ENCODE measurements at regions of chr5 and their contacts with region 1.

Region 1: GRCh38 chr5:178075840-178076548 is 37.3 kb upstream of the N4BP3 start:
- DNase-seq: peak; percentile 13
- H3K4me3 ChIP-seq: no peak overlapping the region
- H3K27ac ChIP-seq: peak overlapping the region; percentile 21
- H3K27me3 ChIP-seq: peaks cover 36% of the 10 kb centered on the region
- CTCF ChIP-seq: peak; percentile 88

Region 2: GRCh38 chr5:178120868-178121357 is 44.9 kb after region 1 on chr5:
- CTCF ChIA-PET with region 1: interaction called, 15 read pairs
- POLR2A ChIA-PET with region 1: interaction called, 8 read pairs
- DNase-seq: peak; percentile 55
- H3K4me3 ChIP-seq: peak overlapping the region; percentile 43
- H3K27ac ChIP-seq: no peak overlapping the region
- H3K27me3 ChIP-seq: peaks cover 28% of the 10 kb centered on the region
- CTCF ChIP-seq: peak; percentile 52

Region 3: DNA sequence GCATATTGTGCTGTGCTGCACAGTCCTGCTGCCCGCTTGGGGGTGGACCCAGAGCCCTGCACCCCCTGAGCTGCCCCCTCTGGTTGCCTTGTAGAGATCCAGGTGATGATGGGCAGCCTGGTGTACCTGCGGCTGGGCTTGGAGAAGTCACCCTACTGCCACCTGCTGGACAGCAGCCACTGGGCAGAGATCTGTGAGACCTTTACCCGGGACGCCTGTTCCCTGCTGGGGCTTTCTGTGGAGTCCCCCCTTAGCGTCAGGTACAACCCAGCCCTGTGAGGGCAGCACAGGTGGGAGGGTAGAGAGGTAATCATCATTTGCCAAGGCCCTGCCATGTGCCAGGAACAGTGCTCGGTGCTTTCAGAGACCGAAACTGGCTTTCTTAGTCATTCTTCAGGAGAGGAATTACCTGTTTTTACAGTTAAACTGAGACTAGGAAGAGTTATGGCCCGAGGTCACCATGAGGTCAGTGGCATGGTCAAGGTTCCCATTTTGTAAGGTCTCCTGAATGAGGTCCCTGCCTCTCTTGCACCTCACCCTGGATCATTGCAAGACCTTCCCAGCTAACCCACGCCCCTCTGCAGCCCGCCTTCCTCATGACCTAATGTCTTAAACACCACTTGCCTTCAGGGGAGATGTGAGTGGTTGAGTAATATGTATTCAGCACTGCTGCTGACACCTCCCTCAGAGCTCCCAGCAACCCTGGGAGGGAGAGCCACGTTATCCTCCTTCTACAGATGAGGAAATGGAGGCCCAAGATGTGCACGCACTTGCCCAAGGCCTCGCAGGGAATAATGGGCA is 70.2 kb after region 1 on chr5:
- CTCF ChIA-PET with region 1: interaction called, 104 read pairs
- POLR2A ChIA-PET with region 1: interaction called, 15 read pairs
- DNase-seq: no peak
- H3K4me3 ChIP-seq: no peak overlapping the region
- H3K27ac ChIP-seq: peak overlapping the region; percentile 2
- H3K27me3 ChIP-seq: no peaks in the 10 kb centered on the region
- CTCF ChIP-seq: peak; percentile 77

Region 4: GRCh38 chr5:178153573-178154343 is 77.8 kb after region 1 on chr5 and contains the start of gene NHP2:
- CTCF ChIA-PET with region 1: interaction called, 104 read pairs
- POLR2A ChIA-PET with region 1: interaction called, 7 read pairs
- DNase-seq: peak; percentile 98
- H3K4me3 ChIP-seq: peak within 1 kb of the TSS; percentile 61
- H3K27ac ChIP-seq: peak within 1 kb of the TSS; percentile 52
- H3K27me3 ChIP-seq: no peaks in the 10 kb centered on the region
- CTCF ChIP-seq: no peak
- polyA plus RNA-seq, gene NHP2: 93.1 and 108 TPM in 2 replicates

Region 5: GRCh38 chr5:178163772-178164735 is 88.1 kb after region 1 on chr5:
- CTCF ChIA-PET with region 1: interaction called, 38 read pairs
- POLR2A ChIA-PET with region 1: no interaction called
- DNase-seq: no peak
- H3K4me3 ChIP-seq: peak overlapping the region; percentile 42
- H3K27ac ChIP-seq: no peak overlapping the region
- H3K27me3 ChIP-seq: peaks cover 36% of the 10 kb centered on the region
- CTCF ChIP-seq: peak; percentile 99

Region 6: GRCh38 chr5:178170995-178171394 is 95.0 kb after region 1 on chr5:
- CTCF ChIA-PET with region 1: interaction called, 15 read pairs
- POLR2A ChIA-PET with region 1: no interaction called
- DNase-seq: no peak
- H3K4me3 ChIP-seq: no peak overlapping the region
- H3K27ac ChIP-seq: no peak overlapping the region
- H3K27me3 ChIP-seq: peaks cover 14% of the 10 kb centered on the region
- CTCF ChIP-seq: no peak

Region 7: GRCh38 chr5:178204182-178204894 is 128.3 kb after region 1 on chr5 and contains the start of gene HNRNPAB:
- CTCF ChIA-PET with region 1: interaction called, 4 read pairs
- POLR2A ChIA-PET with region 1: interaction called, 11 read pairs
- DNase-seq: peak; percentile 95
- H3K4me3 ChIP-seq: peak within 1 kb of the TSS; percentile 75
- H3K27ac ChIP-seq: peak within 1 kb of the TSS; percentile 11
- H3K27me3 ChIP-seq: no peaks in the 10 kb centered on the region
- CTCF ChIP-seq: no peak
- polyA plus RNA-seq, gene HNRNPAB: 90.9 and 102 TPM in 2 replicates

Measured in AG04450 (cell line).